ENCODE measurements at regions of chr10 and their contacts with region 1.

Region 1: DNA sequence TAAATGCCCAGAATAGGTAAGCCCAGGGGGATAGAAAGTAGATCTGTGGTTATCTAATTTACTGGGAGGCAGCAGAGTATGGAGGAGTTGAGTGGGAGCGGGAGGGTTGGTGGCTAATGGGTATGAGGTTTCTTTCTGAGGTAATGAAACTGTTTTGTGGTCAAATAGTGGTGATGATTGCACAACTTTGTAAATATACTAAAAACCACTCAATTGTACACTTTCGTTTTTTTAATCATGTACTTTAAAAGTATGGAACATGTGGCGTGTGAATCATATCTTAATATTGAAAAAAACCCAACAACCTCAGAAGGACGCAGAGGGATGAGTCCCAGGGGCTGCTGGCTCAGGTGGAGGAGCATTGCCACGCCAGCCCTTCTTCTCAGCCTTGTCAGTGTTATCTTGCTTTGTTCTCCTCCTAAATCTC is 118.1 kb downstream of the WDR11 start:
- DNase-seq: no peak
- H3K4me3 ChIP-seq: no peak overlapping the region
- H3K27ac ChIP-seq: no peak overlapping the region
- H3K4me1 ChIP-seq: no peaks in the 10 kb centered on the region
- H3K27me3 ChIP-seq: peaks cover 9% of the 10 kb centered on the region
- CTCF ChIP-seq: no peak
- EP300 ChIP-seq: no peak
- POLR2A ChIP-seq: no peak

Region 2: GRCh38 chr10:120917521-120918250 is 51.5 kb before region 1 on chr10:
- in situ Hi-C with region 1: no loop called
- intact Hi-C with region 1: no loop called
- DNase-seq: no peak
- H3K4me3 ChIP-seq: no peak overlapping the region
- H3K27ac ChIP-seq: no peak overlapping the region
- H3K4me1 ChIP-seq: no peaks in the 10 kb centered on the region
- H3K27me3 ChIP-seq: no peaks in the 10 kb centered on the region
- CTCF ChIP-seq: no peak
- EP300 ChIP-seq: no peak
- POLR2A ChIP-seq: no peak

Region 3: GRCh38 chr10:121007264-121007663 is 38.0 kb after region 1 on chr10:
- in situ Hi-C with region 1: no loop called
- intact Hi-C with region 1: loop called (anchors 1 kb)
- DNase-seq: no peak
- H3K4me3 ChIP-seq: no peak overlapping the region
- H3K27ac ChIP-seq: no peak overlapping the region
- H3K4me1 ChIP-seq: peaks cover 0 to 3% (median 2%) of the 10 kb centered on the region in 4 donors
- H3K27me3 ChIP-seq: no peaks in the 10 kb centered on the region
- CTCF ChIP-seq: no peak
- EP300 ChIP-seq: no peak
- POLR2A ChIP-seq: no peak

Region 4: GRCh38 chr10:121608469-121609190 is 639.4 kb after region 1 on chr10:
- in situ Hi-C with region 1: loop called in 2 of 4 experiments (anchors 25 kb)
- intact Hi-C with region 1: no loop called
- DNase-seq: peak; percentile 75
- H3K4me3 ChIP-seq: peak overlapping the region; percentile 17 to 28 (median 20)
- H3K27ac ChIP-seq: peak overlapping the region in 1 of 4 donors; percentile 38
- H3K4me1 ChIP-seq: peaks cover 0 to 7% (median 2%) of the 10 kb centered on the region in 4 donors
- H3K27me3 ChIP-seq: no peaks in the 10 kb centered on the region
- CTCF ChIP-seq: peak; percentile 57 to 94 (median 91)
- EP300 ChIP-seq: no peak
- POLR2A ChIP-seq: no peak

Measured in transverse colon (tissue), 4 donors.